ENCODE measurements at regions of chr19 and their contacts with region 1.

Region 1: DNA sequence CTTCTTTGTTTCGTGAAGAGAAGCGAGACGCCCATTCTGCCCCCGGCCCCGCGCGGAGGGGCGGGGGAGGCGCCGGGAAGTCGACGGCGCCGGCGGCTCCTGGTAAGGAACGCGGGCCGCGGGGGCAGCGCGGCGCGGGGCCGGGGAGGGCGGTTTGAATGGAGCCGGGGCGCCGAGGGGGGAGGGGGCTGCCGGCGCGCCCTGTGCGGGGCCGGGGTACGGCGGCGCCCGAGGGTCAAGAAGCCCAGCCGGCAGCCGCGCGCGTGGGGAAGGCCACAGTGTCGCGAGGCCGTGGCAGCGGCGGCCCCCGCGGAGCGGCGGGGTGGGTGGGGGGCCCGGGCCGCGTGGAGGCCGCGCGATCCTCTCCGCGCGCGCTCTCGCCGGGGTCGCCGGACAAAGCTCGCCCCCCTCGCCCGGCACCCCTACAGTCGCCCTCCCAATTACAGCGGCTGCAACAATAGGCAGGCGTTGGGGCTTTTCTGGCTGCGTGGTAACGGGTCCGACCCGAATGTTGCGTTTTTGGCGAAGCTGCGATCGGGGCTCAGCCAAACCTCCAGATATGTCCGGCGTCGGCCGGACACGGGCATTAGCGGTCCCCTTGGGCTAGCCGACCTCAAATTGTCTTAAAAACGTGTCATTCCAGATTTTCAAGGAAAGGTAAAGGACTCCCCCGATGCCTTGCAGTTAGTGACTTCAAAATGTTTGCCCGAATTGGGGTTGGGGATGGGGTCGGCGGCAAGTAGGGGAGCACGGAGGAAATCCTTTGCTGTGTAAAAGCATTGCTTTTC is 437 bp downstream of the SMARCA4 start:
- DNase-seq: no peak
- ATAC-seq: peak; percentile 43 to 55 (median 52)
- H3K4me3 ChIP-seq: peak overlapping the region; percentile 82 to 92
- H3K4me3 Mint-ChIP-seq: peak overlapping the region; percentile 87 to 90 (median 90)
- H3K27ac ChIP-seq: peak overlapping the region; percentile 70
- H3K27ac Mint-ChIP-seq: peak overlapping the region; percentile 85 to 88
- H3K4me1 ChIP-seq: peaks cover 15 to 47% of the 10 kb centered on the region in 2 experiments
- H3K4me1 Mint-ChIP-seq: peaks cover 46 to 49% (median 48%) of the 10 kb centered on the region in 3 donors
- H3K27me3 ChIP-seq: no peaks in the 10 kb centered on the region
- H3K27me3 Mint-ChIP-seq: no peaks in the 10 kb centered on the region

Region 2: GRCh38 chr19:10928525-10929401 is 32.5 kb before region 1 on chr19 and contains the starts of genes TIMM29 and YIPF2:
- CTCF ChIA-PET with region 1: no interaction called
- POLR2A ChIA-PET with region 1: no interaction called
- DNase-seq: peak; percentile 83 to 96 (median 89)
- ATAC-seq: peak; percentile 86 to 93 (median 89)
- H3K4me3 ChIP-seq: peak within 1 kb of the TSS; percentile 58 to 79
- H3K4me3 Mint-ChIP-seq: peak within 1 kb of the TSS; percentile 90 to 92 (median 91)
- H3K27ac ChIP-seq: peak within 1 kb of the TSS; percentile 59
- H3K27ac Mint-ChIP-seq: peak within 1 kb of the TSS; percentile 87 to 93
- H3K4me1 ChIP-seq: peaks cover 13 to 36% of the 10 kb centered on the region in 2 experiments
- H3K4me1 Mint-ChIP-seq: peaks cover 17 to 31% (median 27%) of the 10 kb centered on the region in 3 donors
- H3K27me3 ChIP-seq: no peaks in the 10 kb centered on the region
- H3K27me3 Mint-ChIP-seq: no peaks in the 10 kb centered on the region
- total RNA-seq, gene TIMM29: 19.2 to 40.4 (median 37.2) TPM
- total RNA-seq, gene YIPF2: 21.2 to 34.3 (median 31.5) TPM

Region 3: GRCh38 chr19:10946964-10947657 is 14.2 kb before region 1 on chr19:
- CTCF ChIA-PET with region 1: interaction called, 3 read pairs
- POLR2A ChIA-PET with region 1: interaction called, 5 to 11 read pairs
- DNase-seq: no peak
- ATAC-seq: no peak
- H3K4me3 ChIP-seq: no peak overlapping the region
- H3K4me3 Mint-ChIP-seq: no peak overlapping the region
- H3K27ac ChIP-seq: no peak overlapping the region
- H3K27ac Mint-ChIP-seq: no peak overlapping the region
- H3K4me1 ChIP-seq: peaks cover 0 to 3% of the 10 kb centered on the region in 2 experiments
- H3K4me1 Mint-ChIP-seq: peaks cover 0 to 4% (median 1%) of the 10 kb centered on the region in 3 donors
- H3K27me3 ChIP-seq: no peaks in the 10 kb centered on the region
- H3K27me3 Mint-ChIP-seq: no peaks in the 10 kb centered on the region

Region 4: GRCh38 chr19:10975374-10976130 is 14.3 kb after region 1 on chr19:
- CTCF ChIA-PET with region 1: no interaction called
- POLR2A ChIA-PET with region 1: interaction called in 1 of 2 experiments, 11 read pairs
- DNase-seq: no peak
- ATAC-seq: no peak
- H3K4me3 ChIP-seq: no peak overlapping the region
- H3K4me3 Mint-ChIP-seq: no peak overlapping the region
- H3K27ac ChIP-seq: no peak overlapping the region
- H3K27ac Mint-ChIP-seq: no peak overlapping the region
- H3K4me1 ChIP-seq: peaks cover 12 to 28% of the 10 kb centered on the region in 2 experiments
- H3K4me1 Mint-ChIP-seq: peaks cover 36 to 52% (median 46%) of the 10 kb centered on the region in 3 donors
- H3K27me3 ChIP-seq: no peaks in the 10 kb centered on the region
- H3K27me3 Mint-ChIP-seq: no peaks in the 10 kb centered on the region

Region 5: GRCh38 chr19:11059511-11060358 is 98.5 kb after region 1 on chr19:
- CTCF ChIA-PET with region 1: no interaction called
- POLR2A ChIA-PET with region 1: no interaction called
- DNase-seq: no peak
- ATAC-seq: no peak
- H3K4me3 ChIP-seq: no peak overlapping the region
- H3K4me3 Mint-ChIP-seq: no peak overlapping the region
- H3K27ac ChIP-seq: no peak overlapping the region
- H3K27ac Mint-ChIP-seq: no peak overlapping the region
- H3K4me1 ChIP-seq: peaks cover 0 to 2% of the 10 kb centered on the region in 2 experiments
- H3K4me1 Mint-ChIP-seq: no peaks in the 10 kb centered on the region
- H3K27me3 ChIP-seq: no peaks in the 10 kb centered on the region
- H3K27me3 Mint-ChIP-seq: no peaks in the 10 kb centered on the region